Activated T-helper 2 cell treated with anti-CD3 and anti-CD28 coated beads, Interferon-gamma antibody, Interleukin-2, Interleukin-4, amounts not matched to agents 10 μg/mL and 5 μg/mL and 100 μg/mL, durations not matched to agents 14 hours and 24 hours and 36 hours (primary cell): ENCODE measurements at regions of chr11 and their contacts with region 1.

Region 1: DNA sequence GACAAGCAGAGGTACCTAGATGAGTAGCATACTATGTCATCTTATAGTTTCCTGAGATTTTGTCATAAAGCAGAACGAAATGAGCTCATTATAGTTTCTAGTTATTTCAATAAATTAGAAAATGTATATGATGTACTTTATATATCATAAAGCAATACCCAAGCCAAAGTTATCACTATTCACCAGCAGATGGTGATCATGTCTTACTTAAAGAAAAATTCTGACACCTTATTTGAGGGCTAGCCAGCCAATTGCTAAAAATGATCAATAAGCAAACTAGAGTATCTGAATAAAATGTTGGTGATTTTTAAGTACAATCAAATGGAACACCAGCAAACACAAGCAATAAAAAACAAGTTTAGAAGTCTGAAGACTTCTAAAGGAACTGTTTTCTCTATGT is 44.1 kb downstream of the RSF1 start:
- DNase-seq: no peak
- H3K4me3 Mint-ChIP-seq: no peak overlapping the region
- H3K27ac Mint-ChIP-seq: no peak overlapping the region
- H3K4me1 Mint-ChIP-seq: peaks cover 19% of the 10 kb centered on the region
- H3K27me3 Mint-ChIP-seq: no peaks in the 10 kb centered on the region

Region 2: GRCh38 chr11:77842441-77843121 is 66.1 kb after region 1 on chr11:
- intact Hi-C with region 1: no loop called
- DNase-seq: no peak
- H3K4me3 Mint-ChIP-seq: no peak overlapping the region
- H3K27ac Mint-ChIP-seq: no peak overlapping the region
- H3K4me1 Mint-ChIP-seq: no peaks in the 10 kb centered on the region
- H3K27me3 Mint-ChIP-seq: no peaks in the 10 kb centered on the region

Region 3: GRCh38 chr11:77994412-77995362 is 218.2 kb after region 1 on chr11 and contains the start of gene INTS4:
- intact Hi-C with region 1: loop called (anchors 2 kb)
- DNase-seq: peak; percentile 99
- H3K4me3 Mint-ChIP-seq: peak within 1 kb of the TSS; percentile 91
- H3K27ac Mint-ChIP-seq: peak within 1 kb of the TSS; percentile 76
- H3K4me1 Mint-ChIP-seq: peaks cover 15% of the 10 kb centered on the region
- H3K27me3 Mint-ChIP-seq: no peaks in the 10 kb centered on the region
- total RNA-seq, gene INTS4: 62.7 and 66.8 TPM in 2 replicates

Region 4: DNA sequence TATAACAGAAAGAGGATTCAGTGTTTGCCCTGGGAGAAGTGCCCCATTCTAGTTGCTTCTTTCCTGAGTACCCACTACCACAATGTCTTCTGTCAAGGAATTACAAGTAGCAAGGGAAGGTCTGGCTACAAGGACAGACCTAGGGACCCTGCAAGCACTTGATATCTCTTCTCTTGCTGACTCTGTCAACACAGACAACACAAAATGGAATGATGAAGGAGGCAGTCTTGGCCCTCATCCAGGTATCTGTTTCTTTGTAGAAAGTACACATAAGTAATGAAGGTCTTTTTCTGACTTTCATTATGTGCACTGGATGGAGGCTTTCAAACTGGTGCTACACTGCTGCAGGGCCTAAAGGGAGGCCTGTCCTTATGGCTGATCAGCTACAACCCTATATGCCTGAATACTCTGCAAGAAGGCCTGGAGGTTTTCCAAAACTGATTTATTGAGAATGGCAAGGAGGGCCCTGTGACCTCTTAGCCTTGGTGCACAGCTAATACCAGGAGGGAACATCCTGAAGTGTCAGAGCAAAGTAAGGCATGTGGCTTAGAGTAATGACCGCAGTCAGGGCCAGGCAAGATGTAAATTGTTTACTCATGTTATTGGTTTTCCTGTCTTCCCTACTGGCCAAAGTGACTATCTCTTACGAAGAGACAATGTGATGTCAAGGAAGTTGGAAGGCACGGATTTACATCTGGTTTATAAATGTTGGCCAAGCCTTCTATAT is 609.9 kb after region 1 on chr11:
- intact Hi-C with region 1: loop called (anchors 5 kb)
- DNase-seq: no peak
- H3K4me3 Mint-ChIP-seq: no peak overlapping the region
- H3K27ac Mint-ChIP-seq: no peak overlapping the region
- H3K4me1 Mint-ChIP-seq: peaks cover 25% of the 10 kb centered on the region
- H3K27me3 Mint-ChIP-seq: no peaks in the 10 kb centered on the region